Right ventricle myocardium inferior (tissue), 1 donor: ENCODE measurements at regions of chr11 and their contacts with region 1.

Region 1: GRCh38 chr11:103903621-103904323 is 132.7 kb upstream of the DDI1 start:
- DNase-seq: no peak
- ATAC-seq: no peak

Region 2: DNA sequence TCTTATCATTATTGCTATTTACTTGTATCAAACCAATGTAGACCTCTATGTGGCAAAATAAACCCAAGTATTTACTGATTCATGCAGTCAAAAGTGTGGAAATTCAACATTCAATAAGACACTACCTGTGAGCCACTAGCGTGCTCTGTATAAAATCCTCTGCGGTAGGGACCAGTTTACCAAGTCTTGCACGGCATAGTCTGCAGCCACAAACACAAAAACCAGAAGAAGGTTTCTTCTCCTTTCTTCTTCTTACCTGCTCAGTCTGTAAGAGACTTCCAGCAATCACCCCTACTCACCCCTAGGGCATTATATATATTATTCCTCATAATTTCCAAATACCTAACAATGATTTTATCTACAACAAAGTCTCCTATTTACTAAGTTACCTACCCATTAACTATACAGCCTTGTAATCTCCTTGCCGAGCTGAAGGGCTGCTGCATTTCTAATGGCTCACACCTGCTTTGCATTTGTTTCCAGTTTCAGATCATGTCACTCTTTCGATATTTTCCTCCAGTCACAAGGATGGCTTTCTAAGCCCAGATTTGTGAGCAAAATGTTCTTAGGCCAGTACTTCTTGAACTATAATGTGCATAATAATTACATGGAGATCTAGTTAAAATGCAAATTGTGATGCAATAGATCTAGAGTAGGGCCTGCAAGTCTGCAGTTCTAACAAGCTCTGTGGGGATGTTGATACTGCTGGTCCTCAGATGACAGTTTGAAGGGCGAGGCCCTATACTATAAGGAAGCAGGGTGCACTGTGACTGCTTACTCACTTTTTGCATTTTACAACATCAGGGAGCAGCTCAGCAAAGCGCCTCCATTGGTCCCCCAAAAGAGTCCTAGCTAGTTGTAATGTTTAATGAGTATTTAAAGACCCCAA is 59.2 kb before region 1 on chr11:
- intact Hi-C with region 1: loop called (anchors 2 kb)
- DNase-seq: no peak
- ATAC-seq: no peak